PC-3 (cell line): ENCODE measurements at regions of chr11 and their contacts with region 1.

Region 1: GRCh38 chr11:112086422-112087191 is at the starts of genes SDHD and TIMM8B:
- DNase-seq: peak; percentile 99
- ATAC-seq: peak; percentile 90
- H3K4me3 ChIP-seq: peak within 1 kb of the TSS; percentile 88
- H3K27ac ChIP-seq: peak within 1 kb of the TSS; percentile 49
- H3K4me1 ChIP-seq: peaks cover 41% of the 10 kb centered on the region
- H3K27me3 ChIP-seq: no peaks in the 10 kb centered on the region
- CTCF ChIP-seq: 0 out of 2 replicates have a peak, but pooled peaks have one; percentile 12
- total RNA-seq, gene SDHD: 139 and 184 TPM in 2 replicates
- total RNA-seq, gene TIMM8B: 210 and 238 TPM in 2 replicates

Region 2: DNA sequence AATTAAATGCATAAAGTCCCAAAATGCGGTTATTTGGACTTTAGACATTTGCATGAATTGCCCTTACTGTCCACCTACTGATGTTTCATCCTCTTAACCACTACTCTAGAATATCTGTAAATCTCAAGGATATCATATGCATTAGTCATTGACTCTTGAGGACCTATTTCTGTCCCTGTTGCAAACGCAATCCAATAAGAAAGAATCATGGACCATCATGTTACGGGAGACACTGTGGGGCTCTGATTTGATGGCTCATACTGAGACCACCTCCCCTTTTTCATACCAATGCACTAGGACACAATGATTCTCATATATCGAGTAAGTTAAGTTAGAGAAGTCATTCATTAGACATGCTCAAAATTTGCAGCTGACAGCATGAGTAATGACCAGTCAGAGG is 826.7 kb before region 1 on chr11:
- CTCF ChIA-PET with region 1: no interaction called
- POLR2A ChIA-PET with region 1: no interaction called
- intact Hi-C with region 1: no loop called
- DNase-seq: peak; percentile 21
- ATAC-seq: no peak
- H3K4me3 ChIP-seq: no peak overlapping the region
- H3K27ac ChIP-seq: no peak overlapping the region
- H3K4me1 ChIP-seq: no peaks in the 10 kb centered on the region
- H3K27me3 ChIP-seq: peaks cover 75% of the 10 kb centered on the region
- CTCF ChIP-seq: no peak

Region 3: GRCh38 chr11:111878849-111879636 is 207.6 kb before region 1 on chr11 and contains the starts of genes CFAP68 and FDXACB1:
- CTCF ChIA-PET with region 1: no interaction called
- POLR2A ChIA-PET with region 1: no interaction called
- intact Hi-C with region 1: loop called (anchors 5 kb)
- DNase-seq: peak; percentile 99
- ATAC-seq: peak; percentile 84
- H3K4me3 ChIP-seq: peak within 1 kb of the TSS; percentile 80
- H3K27ac ChIP-seq: peak within 1 kb of the TSS; percentile 79
- H3K4me1 ChIP-seq: peaks cover 9% of the 10 kb centered on the region
- H3K27me3 ChIP-seq: no peaks in the 10 kb centered on the region
- CTCF ChIP-seq: peak; percentile 91
- total RNA-seq, gene CFAP68: 26.0 and 27.4 TPM in 2 replicates
- total RNA-seq, gene FDXACB1: 2.5 and 3.0 TPM in 2 replicates

Region 4: DNA sequence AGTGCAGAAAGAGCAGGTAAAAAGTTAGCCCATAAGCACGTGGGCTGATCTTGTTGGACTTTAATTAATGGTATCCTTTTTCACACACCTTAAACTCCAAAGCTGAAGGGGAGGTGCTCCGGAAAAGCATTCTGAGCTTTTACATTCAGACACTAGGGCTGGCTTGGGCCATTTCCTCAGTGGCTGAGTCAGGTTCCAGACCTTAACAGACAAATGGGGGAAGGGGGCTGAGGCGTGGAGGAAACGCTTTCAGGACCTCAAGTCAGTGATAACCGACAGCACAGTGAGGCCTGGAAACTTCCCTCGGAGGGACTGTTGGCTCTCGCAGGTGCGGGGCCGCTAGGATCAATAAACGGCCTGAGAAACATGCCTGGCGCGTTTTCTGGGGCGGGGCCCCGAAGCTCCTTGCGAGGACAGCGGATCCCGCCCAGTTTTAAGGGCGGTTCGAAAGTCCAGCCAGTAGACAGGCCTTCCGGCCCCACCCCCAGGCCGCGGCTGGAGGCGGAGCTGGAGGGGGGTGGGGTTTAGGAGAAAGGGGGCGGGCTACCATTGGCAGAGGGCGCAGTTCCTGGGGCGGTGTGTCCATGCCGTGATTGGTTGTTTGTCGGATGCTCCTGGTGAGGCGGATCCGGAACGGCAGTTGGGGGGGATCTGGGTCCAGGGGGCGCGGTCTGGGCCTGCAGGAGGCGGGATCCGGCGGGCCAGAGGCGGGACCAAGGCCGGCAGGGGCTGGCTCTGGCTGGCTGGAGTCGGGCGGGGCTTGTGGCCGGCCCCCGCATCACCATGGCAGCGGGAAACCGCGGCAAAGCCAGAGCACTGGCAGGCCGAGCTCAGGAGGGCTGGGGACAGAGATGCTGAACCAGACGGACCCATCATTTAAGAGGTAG is 159.9 kb before region 1 on chr11:
- CTCF ChIA-PET with region 1: no interaction called
- POLR2A ChIA-PET with region 1: interaction called, 13 read pairs
- intact Hi-C with region 1: loop called (anchors 5 kb)
- DNase-seq: peak; percentile 99
- ATAC-seq: peak; percentile 92
- H3K4me3 ChIP-seq: peak overlapping the region; percentile 69
- H3K27ac ChIP-seq: peak overlapping the region; percentile 17
- H3K4me1 ChIP-seq: peaks cover 25% of the 10 kb centered on the region
- H3K27me3 ChIP-seq: no peaks in the 10 kb centered on the region
- CTCF ChIP-seq: no peak

Region 5: GRCh38 chr11:112074026-112074811 is 12.4 kb before region 1 on chr11 and contains the start of gene NKAPD1:
- CTCF ChIA-PET with region 1: no interaction called
- POLR2A ChIA-PET with region 1: no interaction called
- intact Hi-C with region 1: loop called (anchors 1 kb)
- DNase-seq: peak; percentile 92
- ATAC-seq: peak; percentile 90
- H3K4me3 ChIP-seq: peak within 1 kb of the TSS; percentile 93
- H3K27ac ChIP-seq: peak within 1 kb of the TSS; percentile 89
- H3K4me1 ChIP-seq: peaks cover 16% of the 10 kb centered on the region
- H3K27me3 ChIP-seq: no peaks in the 10 kb centered on the region
- CTCF ChIP-seq: no peak
- total RNA-seq, gene NKAPD1: 19.4 and 34.3 TPM in 2 replicates

Region 6: DNA sequence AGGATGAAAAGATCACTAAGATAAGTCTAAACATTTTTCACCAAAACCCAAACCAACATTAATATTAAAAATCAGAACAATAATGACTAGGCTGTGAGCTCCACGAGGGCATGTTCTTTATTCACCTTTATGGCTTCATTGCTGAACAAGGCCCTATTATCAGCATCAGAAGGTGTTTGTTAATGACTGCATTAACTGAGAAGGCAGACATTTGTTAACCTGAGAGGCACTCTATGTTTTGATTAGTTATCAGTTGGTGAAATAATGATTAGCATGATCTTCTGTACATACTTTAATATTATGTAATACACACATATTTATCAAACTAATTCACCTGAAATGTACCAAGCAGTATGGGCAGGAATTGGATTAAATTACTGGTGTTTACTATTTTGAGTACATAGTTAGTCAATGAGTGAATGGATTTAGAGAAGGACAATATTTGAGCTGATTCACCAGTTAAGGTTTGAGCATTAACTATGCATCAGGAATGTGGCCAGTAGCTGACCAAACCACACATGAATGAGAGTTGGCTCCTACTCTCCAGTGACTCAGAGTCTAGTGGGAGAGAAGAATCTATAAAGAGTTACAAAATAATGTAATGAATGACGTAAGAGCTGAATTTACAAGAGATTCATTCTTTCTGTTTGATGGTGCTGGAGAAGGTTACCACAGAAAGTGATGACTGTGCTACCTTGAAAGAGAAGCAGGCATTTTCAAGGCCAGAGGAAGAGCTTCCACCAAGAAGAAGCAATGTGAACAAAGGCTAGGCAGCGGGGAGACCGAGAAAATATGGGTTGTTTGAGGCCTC is 70.6 kb after region 1 on chr11:
- CTCF ChIA-PET with region 1: interaction called, 4 read pairs
- POLR2A ChIA-PET with region 1: no interaction called
- intact Hi-C with region 1: loop called (anchors 2 kb)
- DNase-seq: peak; percentile 100
- ATAC-seq: peak; percentile 97
- H3K4me3 ChIP-seq: 0 out of 2 replicates have a peak overlapping the region, but pooled peaks have one; percentile 15
- H3K27ac ChIP-seq: peak overlapping the region; percentile 92
- H3K4me1 ChIP-seq: peaks cover 61% of the 10 kb centered on the region
- H3K27me3 ChIP-seq: no peaks in the 10 kb centered on the region
- CTCF ChIP-seq: no peak

Region 7: DNA sequence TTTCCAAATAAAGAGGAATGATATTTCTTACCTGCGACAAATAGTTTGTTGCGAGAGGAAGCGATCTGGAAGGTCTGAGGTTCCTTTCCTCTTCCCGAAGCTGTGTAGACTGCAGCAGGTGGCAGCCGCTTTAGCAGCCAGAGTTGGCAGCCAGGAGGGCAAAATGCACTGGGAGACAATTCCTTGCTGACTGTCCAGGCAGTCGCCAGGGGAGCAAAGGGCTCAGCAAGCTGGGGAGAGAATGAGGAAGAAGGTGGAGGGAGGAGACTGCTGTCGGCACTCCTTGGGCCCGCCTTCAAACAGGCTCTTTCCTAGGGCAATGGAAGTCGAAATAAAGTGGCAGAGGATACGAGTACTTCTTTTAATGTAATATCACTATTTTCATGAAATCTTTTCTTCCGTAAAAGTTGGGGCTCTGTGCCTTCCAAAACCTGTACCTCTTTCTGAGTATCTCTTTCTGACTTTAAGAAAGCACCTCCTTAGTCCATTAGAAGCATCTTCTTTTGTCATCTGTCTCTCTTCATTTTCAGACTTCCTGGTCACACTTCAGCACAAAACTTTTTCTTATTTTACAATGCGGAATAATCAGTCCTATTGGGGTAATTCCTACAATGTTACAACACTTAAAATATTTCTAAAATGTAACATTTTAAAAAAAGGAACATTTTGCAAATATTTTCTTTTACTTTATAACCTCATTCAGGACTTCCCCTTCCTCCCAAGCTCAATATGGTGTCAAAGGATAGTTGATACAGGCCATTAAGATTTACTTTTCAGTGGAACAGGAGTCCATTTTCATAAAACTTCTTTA is 77.5 kb after region 1 on chr11 and contains the start of gene IL18:
- CTCF ChIA-PET with region 1: interaction called, 3 read pairs
- POLR2A ChIA-PET with region 1: interaction called, 11 read pairs
- intact Hi-C with region 1: no loop called
- DNase-seq: peak; percentile 87
- ATAC-seq: peak; percentile 84
- H3K4me3 ChIP-seq: peak within 1 kb of the TSS; percentile 73
- H3K27ac ChIP-seq: peak within 1 kb of the TSS; percentile 95
- H3K4me1 ChIP-seq: peaks cover 59% of the 10 kb centered on the region
- H3K27me3 ChIP-seq: no peaks in the 10 kb centered on the region
- CTCF ChIP-seq: no peak
- total RNA-seq, gene IL18: 53.6 and 61.6 TPM in 2 replicates

Region 8: DNA sequence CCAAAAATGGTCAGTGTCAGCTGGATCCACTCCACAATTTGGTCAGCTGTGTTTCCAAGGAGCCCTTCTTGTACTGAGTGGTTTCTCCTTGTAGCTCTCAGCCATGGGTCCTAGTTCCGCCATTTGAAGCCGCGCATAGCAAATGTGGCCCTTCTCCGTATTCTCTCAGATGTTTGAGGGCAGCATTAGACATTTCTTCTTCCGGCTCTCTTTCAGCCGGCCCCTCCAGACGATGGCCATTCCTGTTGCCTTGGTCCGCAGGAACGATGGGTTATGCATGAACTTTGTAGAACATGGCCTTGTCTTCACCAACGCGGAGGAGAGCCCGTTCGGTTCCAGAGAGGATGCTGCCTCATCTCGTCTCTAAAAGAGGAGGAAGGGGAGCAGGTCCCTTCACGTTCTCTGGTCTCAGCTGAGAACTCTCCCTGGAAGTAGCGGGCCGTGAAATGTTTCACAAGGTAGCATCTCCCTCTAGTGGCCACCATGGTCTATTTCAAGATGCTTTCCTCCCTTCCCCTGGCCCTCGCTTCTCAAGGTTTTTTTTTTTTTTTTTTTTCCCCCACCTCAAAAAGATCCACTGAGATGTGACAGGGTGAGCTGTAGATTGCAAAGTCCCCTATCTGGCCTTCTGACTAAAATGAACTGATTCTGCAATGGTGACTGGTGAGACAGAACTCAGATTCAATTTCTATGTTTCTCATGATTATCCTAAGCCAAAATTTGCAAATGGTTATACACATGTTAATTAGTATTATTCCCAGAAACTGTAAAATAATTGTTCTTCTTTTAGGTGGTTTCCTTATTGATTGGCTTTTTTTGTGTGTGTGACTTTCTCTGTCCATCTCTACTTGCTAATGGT is 193.9 kb after region 1 on chr11:
- CTCF ChIA-PET with region 1: no interaction called
- POLR2A ChIA-PET with region 1: no interaction called
- intact Hi-C with region 1: loop called (anchors 10 kb)
- DNase-seq: peak; percentile 91
- ATAC-seq: peak; percentile 89
- H3K4me3 ChIP-seq: peak overlapping the region; percentile 72
- H3K27ac ChIP-seq: no peak overlapping the region
- H3K4me1 ChIP-seq: 0 out of 2 replicates have a peak, but pooled peaks cover 4% of the 10 kb centered on the region
- H3K27me3 ChIP-seq: no peaks in the 10 kb centered on the region
- CTCF ChIP-seq: peak; percentile 93